IMR-90 (cell line): ENCODE measurements at regions of chr4 and their contacts with region 1.

Region 1: GRCh38 chr4:117893207-117893606 is 141.1 kb upstream of the NDST3 start:
- DNase-seq: no peak
- ATAC-seq: no peak
- H3K4me3 ChIP-seq: no peak overlapping the region
- H3K27ac ChIP-seq: no peak overlapping the region
- H3K4me1 ChIP-seq: no peaks in the 10 kb centered on the region
- H3K27me3 ChIP-seq: no peaks in the 10 kb centered on the region
- CTCF ChIP-seq: no peak
- POLR2A ChIP-seq: no peak
- RAD21 ChIP-seq: no peak

Region 2: GRCh38 chr4:117293784-117294183 is 599.4 kb before region 1 on chr4:
- CTCF ChIA-PET with region 1: no interaction called
- POLR2A ChIA-PET with region 1: no interaction called
- dilution Hi-C with region 1: no loop called
- in situ Hi-C with region 1: no loop called
- intact Hi-C with region 1: no loop called
- DNase-seq: no peak
- ATAC-seq: no peak
- H3K4me3 ChIP-seq: no peak overlapping the region
- H3K27ac ChIP-seq: no peak overlapping the region
- H3K4me1 ChIP-seq: no peaks in the 10 kb centered on the region
- H3K27me3 ChIP-seq: no peaks in the 10 kb centered on the region
- CTCF ChIP-seq: no peak
- POLR2A ChIP-seq: no peak
- RAD21 ChIP-seq: no peak

Region 3: DNA sequence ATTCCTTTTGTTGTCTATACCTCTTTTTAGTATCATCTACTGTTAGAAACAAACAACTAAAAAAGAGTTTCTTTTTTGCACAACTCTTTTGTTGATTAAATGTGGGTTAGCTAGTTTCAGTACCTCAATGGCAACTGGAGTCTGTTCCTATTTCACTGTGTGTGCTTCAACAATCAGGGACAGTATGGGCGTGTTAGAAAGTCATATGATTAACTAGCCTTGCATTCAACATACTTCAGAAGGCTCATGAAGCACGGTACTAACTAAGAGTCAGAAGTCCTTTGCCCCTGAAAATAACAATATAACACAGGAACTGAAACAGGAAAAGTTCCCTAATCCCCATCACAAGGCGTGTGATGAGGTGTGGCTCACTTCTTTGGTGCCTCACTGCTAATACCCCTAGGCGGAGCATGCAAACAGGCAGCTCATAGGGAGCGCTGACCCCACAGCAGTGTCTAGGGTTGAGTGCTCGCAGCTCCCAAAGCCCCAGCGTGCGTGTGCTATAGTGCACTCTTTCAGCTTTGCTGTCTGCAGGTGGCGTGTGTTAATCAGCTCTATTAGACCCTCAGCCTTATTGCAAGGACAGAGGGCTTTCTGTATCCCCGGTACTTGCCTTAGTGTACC is 62.0 kb before region 1 on chr4:
- CTCF ChIA-PET with region 1: no interaction called
- POLR2A ChIA-PET with region 1: no interaction called
- dilution Hi-C with region 1: no loop called
- in situ Hi-C with region 1: no loop called
- intact Hi-C with region 1: loop called (anchors 2 kb)
- DNase-seq: no peak
- ATAC-seq: no peak
- H3K4me3 ChIP-seq: no peak overlapping the region
- H3K27ac ChIP-seq: no peak overlapping the region
- H3K4me1 ChIP-seq: no peaks in the 10 kb centered on the region
- H3K27me3 ChIP-seq: no peaks in the 10 kb centered on the region
- CTCF ChIP-seq: no peak
- POLR2A ChIP-seq: no peak
- RAD21 ChIP-seq: no peak